ENCODE measurements at regions of chr12 and their contacts with region 1.

Region 1: GRCh38 chr12:121005346-121005815 is 10.9 kb downstream of the C12orf43 start:
- DNase-seq: no peak

Region 2: DNA sequence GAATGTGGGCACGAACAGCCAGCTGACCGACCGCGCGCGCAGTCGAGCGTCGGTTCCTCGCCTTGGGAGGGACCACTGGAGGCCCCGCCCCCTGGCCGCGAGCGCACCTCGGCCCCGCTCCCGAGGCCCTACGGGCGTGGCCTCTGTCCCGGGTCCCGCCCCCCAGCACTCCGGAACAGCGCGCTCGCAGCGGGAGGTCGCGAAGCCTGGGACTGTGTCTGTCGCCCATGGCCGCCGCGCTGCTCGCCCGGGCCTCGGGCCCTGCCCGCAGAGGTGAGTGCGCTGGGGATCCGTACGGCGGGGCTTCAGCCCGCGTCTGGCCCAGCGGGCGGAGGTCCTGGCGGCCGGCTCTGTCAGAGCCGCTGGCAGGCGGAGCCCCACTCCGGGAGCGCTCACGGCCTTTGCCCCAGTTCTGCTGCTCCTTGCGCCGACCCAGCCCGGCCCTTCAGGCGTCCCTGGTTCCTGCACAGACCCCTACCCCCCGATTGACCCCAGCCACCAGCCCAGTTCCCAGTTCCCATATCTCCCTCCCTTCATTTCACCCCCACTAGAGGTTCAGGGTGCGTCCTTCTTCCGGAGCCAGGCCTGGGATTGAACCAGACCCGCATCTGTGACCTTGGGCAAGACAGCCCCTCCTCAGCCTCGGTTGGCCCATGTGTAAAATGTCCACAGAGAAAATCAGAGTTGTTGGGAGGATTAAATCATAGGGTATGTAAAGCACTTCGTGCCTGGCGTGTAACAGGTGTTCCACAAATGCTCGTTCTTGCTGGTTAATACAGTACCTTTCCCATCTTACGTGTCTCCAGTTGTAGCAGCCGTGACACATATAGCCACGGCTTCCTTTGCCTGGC is 279.5 kb before region 1 on chr12 and contains the start of gene ACADS:
- intact Hi-C with region 1: loop called in 1 of 2 experiments (anchors 2 kb)
- DNase-seq: peak; percentile 96
- total RNA-seq, gene ACADS: 12.3 to 15.7 TPM

Region 3: DNA sequence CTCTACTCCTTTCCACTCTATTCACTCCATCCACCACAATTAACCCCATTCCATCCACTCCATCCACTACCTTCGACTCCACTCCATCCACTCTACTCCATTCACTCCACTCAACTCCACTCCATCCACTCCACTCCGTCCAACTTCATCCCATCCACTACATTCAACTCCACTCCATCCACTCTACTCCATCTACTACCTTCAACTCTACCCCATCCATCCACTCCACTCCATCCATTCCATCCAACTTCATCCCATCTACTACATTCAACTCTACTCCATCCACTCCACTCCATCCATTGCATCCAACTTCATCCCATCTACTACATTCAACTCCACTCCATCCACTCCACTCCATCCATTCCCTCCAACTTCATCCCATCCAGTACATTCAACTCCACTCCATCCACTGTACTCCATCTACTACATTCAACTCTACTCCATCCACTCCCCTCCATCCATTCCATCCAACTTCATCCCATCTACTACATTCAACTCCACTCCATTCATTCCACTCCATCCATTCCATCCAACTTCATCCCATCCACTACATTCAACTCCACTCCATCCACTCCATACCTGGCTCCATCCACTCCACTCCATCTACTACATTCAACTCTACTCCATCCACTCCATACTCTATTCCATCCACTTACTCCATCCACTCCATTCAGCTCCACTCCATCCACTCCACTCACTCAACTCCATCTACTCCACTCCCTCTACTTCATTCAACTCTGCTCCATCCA is 10.6 kb before region 1 on chr12:
- intact Hi-C with region 1: no loop called
- DNase-seq: no peak